Activated T-helper 1 cell treated with anti-CD3 and anti-CD28 coated beads, Interleukin-12 subunit alpha, Interleukin-12 subunit beta, Interleukin-2, Interleukin-4 antibody, amounts not matched to agents 30 ng/mL and 10 ng/mL and 1 ng/mL, durations not matched to agents 14 hours and 24 hours and 36 hours (primary cell): ENCODE measurements at regions of chr7 and their contacts with region 1.

Region 1: DNA sequence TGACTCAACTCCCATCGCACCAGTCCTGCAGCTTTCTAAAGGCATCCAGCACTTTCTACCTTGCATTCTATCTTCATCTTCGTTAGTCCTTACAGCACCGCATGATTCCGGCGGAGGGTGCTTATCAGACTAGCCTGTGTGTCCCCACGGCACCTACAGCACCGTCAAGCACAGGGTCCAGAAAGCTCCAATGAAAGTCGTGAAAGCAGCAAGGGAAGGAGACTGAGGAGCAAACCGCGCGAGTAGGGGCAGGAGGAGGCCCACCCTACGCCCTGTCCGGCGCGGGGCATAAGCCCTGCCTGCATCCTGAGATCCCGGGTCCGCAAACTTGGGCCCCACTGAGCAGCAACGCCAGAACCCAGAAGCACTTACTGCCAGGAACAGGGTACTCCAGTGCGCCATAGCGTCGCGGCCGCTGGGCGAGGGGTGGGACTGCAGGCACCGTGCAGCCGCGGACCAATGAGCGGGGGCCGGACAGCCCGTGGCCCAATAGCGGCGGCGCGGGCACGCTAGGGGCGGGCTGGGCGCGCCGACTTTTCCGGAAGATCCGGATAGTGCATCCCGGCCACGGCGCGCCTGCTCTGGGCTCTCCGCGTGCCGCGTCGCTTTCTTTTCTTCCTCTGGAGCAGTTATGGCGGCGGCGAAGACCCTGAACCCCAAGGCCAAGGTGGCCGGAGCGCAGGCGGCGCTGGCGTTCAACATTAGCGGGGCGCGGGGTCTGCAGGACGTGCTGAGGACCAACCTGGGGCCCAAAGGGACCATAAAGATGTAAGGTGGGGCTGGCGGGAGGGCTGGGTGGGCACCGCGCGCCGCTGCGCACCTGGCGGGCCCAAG is 122.1 kb upstream of the VKORC1L1 start:
- DNase-seq: peak; percentile 89
- H3K4me3 Mint-ChIP-seq: peak overlapping the region; percentile 100
- H3K27ac Mint-ChIP-seq: peak overlapping the region; percentile 97
- H3K4me1 Mint-ChIP-seq: peaks cover 11% of the 10 kb centered on the region
- H3K27me3 Mint-ChIP-seq: no peaks in the 10 kb centered on the region

Region 2: GRCh38 chr7:65722345-65722792 is 28.4 kb before region 1 on chr7:
- intact Hi-C with region 1: loop called (anchors 1 kb)
- DNase-seq: peak; percentile 51
- H3K4me3 Mint-ChIP-seq: no peak overlapping the region
- H3K27ac Mint-ChIP-seq: no peak overlapping the region
- H3K4me1 Mint-ChIP-seq: no peaks in the 10 kb centered on the region
- H3K27me3 Mint-ChIP-seq: no peaks in the 10 kb centered on the region

Region 3: GRCh38 chr7:65872776-65873581 is 122.3 kb after region 1 on chr7 and contains the start of gene VKORC1L1:
- intact Hi-C with region 1: loop called (anchors 1 kb)
- DNase-seq: peak; percentile 92
- H3K4me3 Mint-ChIP-seq: peak within 1 kb of the TSS; percentile 85
- H3K27ac Mint-ChIP-seq: peak within 1 kb of the TSS; percentile 73
- H3K4me1 Mint-ChIP-seq: peaks cover 4% of the 10 kb centered on the region
- H3K27me3 Mint-ChIP-seq: no peaks in the 10 kb centered on the region
- total RNA-seq, gene VKORC1L1: 28.8 and 30.1 TPM in 2 replicates

Region 4: GRCh38 chr7:65981965-65982792 is 231.5 kb after region 1 on chr7 and contains the start of gene GUSB:
- intact Hi-C with region 1: loop called (anchors 2 kb)
- DNase-seq: peak; percentile 88
- H3K4me3 Mint-ChIP-seq: peak within 1 kb of the TSS; percentile 87
- H3K27ac Mint-ChIP-seq: peak within 1 kb of the TSS; percentile 90
- H3K4me1 Mint-ChIP-seq: peaks cover 7% of the 10 kb centered on the region
- H3K27me3 Mint-ChIP-seq: no peaks in the 10 kb centered on the region
- total RNA-seq, gene GUSB: 49.7 and 50.1 TPM in 2 replicates

Region 5: GRCh38 chr7:66628361-66629140 is 877.8 kb after region 1 on chr7 and contains the start of gene KCTD7:
- intact Hi-C with region 1: loop called (anchors 1 kb)
- DNase-seq: peak; percentile 94
- H3K4me3 Mint-ChIP-seq: peak within 1 kb of the TSS; percentile 90
- H3K27ac Mint-ChIP-seq: peak within 1 kb of the TSS; percentile 83
- H3K4me1 Mint-ChIP-seq: peaks cover 39% of the 10 kb centered on the region
- H3K27me3 Mint-ChIP-seq: no peaks in the 10 kb centered on the region
- total RNA-seq, gene KCTD7: 11.0 and 13.8 TPM in 2 replicates